ENCODE measurements at regions of chr6 and their contacts with region 1.

Region 1: DNA sequence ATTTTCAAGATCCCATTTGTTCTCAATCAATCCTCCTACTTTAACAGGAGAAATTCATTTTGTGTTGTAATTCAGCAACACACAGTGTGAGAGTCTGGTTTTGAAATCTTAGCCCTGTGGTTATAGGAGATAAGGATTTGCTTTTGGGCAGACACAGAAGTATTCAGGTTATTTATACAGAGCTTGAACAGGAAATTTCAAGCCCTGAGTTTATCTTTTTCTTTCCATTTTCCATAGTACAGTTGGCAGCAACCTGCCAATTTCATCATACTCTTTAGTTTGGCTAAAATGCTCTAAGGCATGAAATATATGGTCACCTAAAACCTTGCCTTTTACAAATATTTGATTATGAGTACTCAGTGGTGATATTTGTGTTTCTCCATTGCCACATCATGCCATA is 41.4 kb downstream of the PKIB start:
- DNase-seq: no peak
- ATAC-seq: no peak
- H3K4me3 ChIP-seq: no peak overlapping the region
- H3K27ac ChIP-seq: no peak overlapping the region
- H3K4me1 ChIP-seq: peaks cover 21% of the 10 kb centered on the region
- H3K27me3 ChIP-seq: no peaks in the 10 kb centered on the region
- CTCF ChIP-seq: no peak
- EP300 ChIP-seq: no peak; a peak in 1 of 4 replicates
- POLR2A ChIP-seq: no peak
- RAD21 ChIP-seq: no peak

Region 2: GRCh38 chr6:122622546-122623118 is 29.0 kb before region 1 on chr6:
- CTCF ChIA-PET with region 1: no interaction called
- POLR2A ChIA-PET with region 1: no interaction called
- in situ Hi-C with region 1: no loop called
- intact Hi-C with region 1: loop called (anchors 1 kb)
- DNase-seq: no peak
- ATAC-seq: no peak
- H3K4me3 ChIP-seq: no peak overlapping the region
- H3K27ac ChIP-seq: no peak overlapping the region
- H3K4me1 ChIP-seq: no peaks in the 10 kb centered on the region
- H3K27me3 ChIP-seq: no peaks in the 10 kb centered on the region
- CTCF ChIP-seq: no peak
- EP300 ChIP-seq: no peak
- POLR2A ChIP-seq: no peak
- RAD21 ChIP-seq: no peak